Gastrocnemius medialis (tissue), 4 donors: ENCODE measurements at regions of chr19 and their contacts with region 1.

Region 1: DNA sequence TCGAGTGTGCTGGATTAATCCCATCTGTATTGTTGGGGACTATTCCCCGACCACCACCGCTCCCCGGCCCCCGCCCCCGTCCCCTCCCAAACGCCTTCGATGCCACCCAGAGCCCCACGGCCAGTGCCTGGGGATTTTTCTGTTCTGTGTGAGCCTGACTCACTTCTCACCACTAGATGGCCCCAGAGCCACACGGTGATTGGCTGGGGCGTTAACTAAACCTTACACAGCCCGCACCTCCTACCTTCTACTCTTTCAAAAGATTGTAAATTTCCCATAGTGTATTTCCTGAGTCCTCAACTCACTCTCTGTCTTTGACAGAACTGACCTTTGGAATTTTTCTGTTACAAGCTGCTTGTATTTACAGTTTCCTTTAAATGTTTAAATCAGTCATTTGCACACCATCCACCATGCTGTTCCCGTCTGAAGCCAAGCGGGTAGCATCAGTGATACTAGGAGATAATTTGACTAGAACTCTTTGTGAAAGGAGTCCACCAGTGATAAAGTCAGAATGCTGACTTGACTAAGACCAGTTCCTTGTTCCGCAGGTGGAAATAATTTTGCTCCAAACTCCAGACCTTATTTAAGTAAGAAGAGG is 61.4 kb downstream of the RFX2 start:
- DNase-seq: peak; percentile 34 to 63
- ATAC-seq: peak; percentile 92 to 95
- H3K4me3 ChIP-seq: no peak overlapping the region
- H3K27ac ChIP-seq: no peak overlapping the region
- H3K4me1 ChIP-seq: peaks cover 0 to 2% of the 10 kb centered on the region in 2 donors
- H3K27me3 ChIP-seq: no peaks in the 10 kb centered on the region
- CTCF ChIP-seq: peak; percentile 63 to 96 (median 80)
- POLR2A ChIP-seq: no peak

Region 2: GRCh38 chr19:6125571-6125989 is 76.7 kb after region 1 on chr19:
- in situ Hi-C with region 1: loop called (anchors 5 kb)
- intact Hi-C with region 1: loop called (anchors 1 kb)
- DNase-seq: peak; percentile 16 to 53
- ATAC-seq: peak; percentile 68 to 78
- H3K4me3 ChIP-seq: no peak overlapping the region
- H3K27ac ChIP-seq: no peak overlapping the region
- H3K4me1 ChIP-seq: no peaks in the 10 kb centered on the region
- H3K27me3 ChIP-seq: no peaks in the 10 kb centered on the region
- CTCF ChIP-seq: peak; percentile 82 to 93 (median 89)
- POLR2A ChIP-seq: no peak

Region 3: GRCh38 chr19:6297202-6297601 is 248.3 kb after region 1 on chr19:
- in situ Hi-C with region 1: loop called in 1 of 4 experiments (anchors 25 kb)
- intact Hi-C with region 1: loop called (anchors 5 kb)
- DNase-seq: no peak
- ATAC-seq: no peak
- H3K4me3 ChIP-seq: no peak overlapping the region
- H3K27ac ChIP-seq: no peak overlapping the region
- H3K4me1 ChIP-seq: no peaks in the 10 kb centered on the region
- H3K27me3 ChIP-seq: no peaks in the 10 kb centered on the region
- CTCF ChIP-seq: no peak
- POLR2A ChIP-seq: no peak

Region 4: DNA sequence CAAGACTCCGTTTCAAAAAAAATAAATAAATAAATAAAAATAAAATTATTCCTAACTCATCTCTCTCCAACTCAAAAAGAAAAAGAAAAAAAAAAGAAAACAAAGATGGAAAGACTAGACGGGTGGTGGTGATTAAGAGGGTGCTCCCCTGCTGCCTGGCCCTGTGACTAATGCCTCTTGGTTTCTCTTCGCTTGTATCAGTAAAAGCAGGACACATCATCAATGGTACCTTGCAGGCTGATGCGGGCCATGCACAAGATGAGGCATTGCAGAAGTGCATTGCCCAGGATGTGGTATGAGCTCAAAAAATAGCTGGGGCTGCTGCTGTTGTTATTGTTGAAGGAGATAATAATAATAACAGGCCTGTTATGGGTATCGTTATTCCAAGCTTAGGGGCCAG is 269.9 kb after region 1 on chr19:
- in situ Hi-C with region 1: loop called in 1 of 4 experiments (anchors 25 kb)
- intact Hi-C with region 1: no loop called
- DNase-seq: no peak
- ATAC-seq: no peak
- H3K4me3 ChIP-seq: no peak overlapping the region
- H3K27ac ChIP-seq: no peak overlapping the region
- H3K4me1 ChIP-seq: no peaks in the 10 kb centered on the region
- H3K27me3 ChIP-seq: peaks cover 0 to 5% (median 0%) of the 10 kb centered on the region in 3 donors
- CTCF ChIP-seq: no peak
- POLR2A ChIP-seq: no peak